Testis (tissue), 5 donors: ENCODE measurements at regions of chr14 and their contacts with region 1.

Region 1: DNA sequence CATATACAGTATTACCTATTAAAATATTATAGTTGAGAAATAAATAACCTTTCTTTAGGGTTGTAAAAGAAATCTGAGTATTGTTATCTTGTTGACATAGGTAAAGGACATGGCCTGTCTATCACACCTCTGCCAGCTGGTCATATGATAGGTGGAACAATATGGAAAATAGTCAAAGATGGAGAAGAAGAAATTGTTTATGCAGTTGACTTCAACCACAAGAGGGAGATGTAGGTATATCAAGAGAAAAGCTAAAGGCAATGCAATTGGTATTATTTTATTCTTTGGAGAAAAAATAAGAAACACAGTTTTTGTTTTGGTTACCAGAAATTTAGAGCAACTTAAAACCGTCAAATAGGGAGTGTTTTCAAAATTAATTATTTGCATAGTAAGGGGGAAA is 13.5 kb downstream of the CPSF2 start:
- DNase-seq: no peak
- H3K4me3 ChIP-seq: no peak overlapping the region
- H3K27ac ChIP-seq: no peak overlapping the region
- H3K4me1 ChIP-seq: peaks cover 4% of the 10 kb centered on the region
- H3K27me3 ChIP-seq: no peaks in the 10 kb centered on the region
- CTCF ChIP-seq: peak; percentile 22 to 60 (median 28)
- POLR2A ChIP-seq: no peak

Region 2: DNA sequence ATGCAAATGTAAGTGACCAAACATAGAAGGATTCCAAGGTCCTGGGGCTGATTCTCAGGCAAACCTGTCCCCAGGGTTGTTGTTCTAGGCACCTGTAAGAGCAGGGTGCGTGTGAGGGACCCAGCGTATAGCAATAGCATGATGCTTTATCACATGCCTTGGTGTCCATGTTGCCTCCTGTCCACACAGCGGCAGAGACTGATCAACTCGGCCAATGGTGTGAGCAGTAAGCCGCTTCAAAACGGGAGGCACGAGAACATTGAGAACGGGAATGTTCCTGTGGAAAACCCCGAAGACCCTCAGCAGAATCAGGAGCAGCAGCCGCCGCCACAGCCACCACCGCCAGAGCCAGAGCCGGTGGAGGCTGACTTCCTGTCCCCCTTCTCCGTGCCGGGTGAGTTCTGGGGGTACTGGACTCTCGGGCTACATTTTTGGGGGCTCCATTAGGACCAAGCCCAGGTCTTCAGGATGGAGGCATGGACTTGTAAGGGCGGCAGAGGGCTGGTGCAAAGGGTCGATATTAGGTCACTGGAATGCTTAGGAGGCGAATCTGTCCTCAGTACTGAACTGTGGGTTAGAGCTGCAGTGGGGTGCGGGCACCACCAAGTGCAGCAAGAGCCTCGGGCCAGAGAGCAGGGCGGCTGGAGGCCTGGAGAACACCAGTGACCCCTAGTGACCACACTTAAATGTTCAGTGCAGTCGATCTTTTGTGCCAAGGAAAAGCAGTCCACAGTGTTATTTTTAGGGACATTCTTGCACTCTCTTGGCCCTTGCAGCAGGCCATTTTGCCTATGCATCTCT is 321.1 kb after region 1 on chr14:
- intact Hi-C with region 1: loop called (anchors 10 kb)
- DNase-seq: peak; percentile 66
- H3K4me3 ChIP-seq: no peak overlapping the region
- H3K27ac ChIP-seq: no peak overlapping the region
- H3K4me1 ChIP-seq: peaks cover 4% of the 10 kb centered on the region
- H3K27me3 ChIP-seq: no peaks in the 10 kb centered on the region
- CTCF ChIP-seq: peak; percentile 45 to 74 (median 66)
- POLR2A ChIP-seq: no peak